SK-N-SH (cell line): ENCODE measurements at regions of chr6 and their contacts with region 1.

Region 1: DNA sequence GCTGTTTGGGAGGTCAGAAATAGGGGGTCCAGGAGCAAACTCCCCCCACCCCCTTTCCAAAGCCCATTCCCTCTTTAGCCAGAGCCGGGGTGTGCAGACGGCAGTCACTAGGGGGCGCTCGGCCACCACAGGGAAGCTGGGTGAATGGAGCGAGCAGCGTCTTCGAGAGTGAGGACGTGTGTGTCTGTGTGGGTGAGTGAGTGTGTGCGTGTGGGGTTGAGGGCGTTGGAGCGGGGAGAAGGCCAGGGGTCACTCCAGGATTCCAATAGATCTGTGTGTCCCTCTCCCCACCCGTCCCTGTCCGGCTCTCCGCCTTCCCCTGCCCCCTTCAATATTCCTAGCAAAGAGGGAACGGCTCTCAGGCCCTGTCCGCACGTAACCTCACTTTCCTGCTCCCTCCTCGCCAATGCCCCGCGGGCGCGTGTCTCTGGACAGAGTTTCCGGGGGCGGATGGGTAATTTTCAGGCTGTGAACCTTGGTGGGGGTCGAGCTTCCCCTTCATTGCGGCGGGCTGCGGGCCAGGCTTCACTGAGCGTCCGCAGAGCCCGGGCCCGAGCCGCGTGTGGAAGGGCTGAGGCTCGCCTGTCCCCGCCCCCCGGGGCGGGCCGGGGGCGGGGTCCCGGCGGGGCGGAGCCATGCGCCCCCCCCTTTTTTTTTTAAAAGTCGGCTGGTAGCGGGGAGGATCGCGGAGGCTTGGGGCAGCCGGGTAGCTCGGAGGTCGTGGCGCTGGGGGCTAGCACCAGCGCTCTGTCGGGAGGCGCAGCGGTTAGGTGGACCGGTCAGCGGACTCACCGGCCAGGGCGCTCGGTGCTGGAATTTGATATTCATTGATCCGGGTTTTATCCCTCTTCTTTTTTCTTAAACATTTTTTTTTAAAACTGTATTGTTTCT is at the start of gene VEGFA:
- DNase-seq: peak; percentile 98
- H3K4me3 ChIP-seq: peak within 1 kb of the TSS; percentile 94 to 95
- H3K27ac ChIP-seq: peak within 1 kb of the TSS; percentile 85 to 94
- H3K4me1 ChIP-seq: peaks cover 16 to 50% of the 10 kb centered on the region in 2 experiments
- H3K27me3 ChIP-seq: no peaks in the 10 kb centered on the region
- CTCF ChIP-seq: peak; percentile 99
- EP300 ChIP-seq: no peak; a peak in 1 of 4 replicates
- RAD21 ChIP-seq: peak; percentile 93
- polyA plus RNA-seq, gene VEGFA: 81.0 and 130 TPM in 2 replicates

Region 2: GRCh38 chr6:43516697-43517504 is 252.9 kb before region 1 on chr6 and contains the starts of genes POLR1C and YIPF3:
- CTCF ChIA-PET with region 1: no interaction called
- POLR2A ChIA-PET with region 1: no interaction called
- DNase-seq: peak; percentile 98
- H3K4me3 ChIP-seq: peak within 1 kb of the TSS; percentile 86 to 100
- H3K27ac ChIP-seq: peak within 1 kb of the TSS; percentile 83 to 88
- H3K4me1 ChIP-seq: peaks cover 13 to 19% of the 10 kb centered on the region in 2 experiments
- H3K27me3 ChIP-seq: no peaks in the 10 kb centered on the region
- CTCF ChIP-seq: no peak
- EP300 ChIP-seq: no peak
- RAD21 ChIP-seq: no peak
- polyA plus RNA-seq, gene POLR1C: 59.1 and 80.6 TPM in 2 replicates
- polyA plus RNA-seq, gene YIPF3: 219 and 248 TPM in 2 replicates

Region 3: GRCh38 chr6:43667245-43668150 is 102.3 kb before region 1 on chr6:
- CTCF ChIA-PET with region 1: interaction called, 111 read pairs
- POLR2A ChIA-PET with region 1: interaction called, 33 read pairs
- DNase-seq: peak; percentile 88
- H3K4me3 ChIP-seq: peak overlapping the region in 1 of 2 experiments; percentile 33; a peak in 2 of 4 replicates
- H3K27ac ChIP-seq: peak overlapping the region in 1 of 2 experiments; percentile 31; a peak in 1 of 4 replicates
- H3K4me1 ChIP-seq: peaks cover 0 to 29% of the 10 kb centered on the region in 2 experiments; a peak in 1 of 4 replicates
- H3K27me3 ChIP-seq: no peaks in the 10 kb centered on the region
- CTCF ChIP-seq: peak; percentile 89
- EP300 ChIP-seq: no peak
- RAD21 ChIP-seq: peak; percentile 86

Region 4: GRCh38 chr6:43746613-43747102 is 23.1 kb before region 1 on chr6:
- CTCF ChIA-PET with region 1: interaction called, 45 read pairs
- POLR2A ChIA-PET with region 1: no interaction called
- DNase-seq: peak; percentile 17
- H3K4me3 ChIP-seq: no peak overlapping the region
- H3K27ac ChIP-seq: no peak overlapping the region
- H3K4me1 ChIP-seq: no peaks in the 10 kb centered on the region; a peak in 1 of 4 replicates
- H3K27me3 ChIP-seq: 0 out of 2 replicates have a peak, but pooled peaks cover 4% of the 10 kb centered on the region
- CTCF ChIP-seq: no peak
- EP300 ChIP-seq: no peak
- RAD21 ChIP-seq: no peak

Region 5: GRCh38 chr6:43847741-43848605 is 78.2 kb after region 1 on chr6:
- CTCF ChIA-PET with region 1: interaction called, 11 read pairs
- POLR2A ChIA-PET with region 1: no interaction called
- DNase-seq: no peak
- H3K4me3 ChIP-seq: no peak overlapping the region
- H3K27ac ChIP-seq: no peak overlapping the region
- H3K4me1 ChIP-seq: peaks cover 0 to 7% of the 10 kb centered on the region in 2 experiments; a peak in 1 of 4 replicates
- H3K27me3 ChIP-seq: no peaks in the 10 kb centered on the region; the same call in 1 of the 2 replicates
- CTCF ChIP-seq: no peak
- EP300 ChIP-seq: no peak
- RAD21 ChIP-seq: no peak

Region 6: GRCh38 chr6:43937236-43938164 is 167.7 kb after region 1 on chr6:
- CTCF ChIA-PET with region 1: interaction called, 36 read pairs
- POLR2A ChIA-PET with region 1: interaction called, 28 read pairs
- DNase-seq: peak; percentile 67
- H3K4me3 ChIP-seq: no peak overlapping the region
- H3K27ac ChIP-seq: peak overlapping the region in 1 of 2 experiments; percentile 100; a peak in 2 of 4 replicates
- H3K4me1 ChIP-seq: peaks cover 0 to 93% of the 10 kb centered on the region in 2 experiments; a peak in 3 of 4 replicates
- H3K27me3 ChIP-seq: no peaks in the 10 kb centered on the region
- CTCF ChIP-seq: no peak
- EP300 ChIP-seq: peak in 1 of 2 experiments; percentile 43; a peak in 2 of 4 replicates
- RAD21 ChIP-seq: 0 out of 2 replicates have a peak, but pooled peaks have one; percentile 17

Region 7: GRCh38 chr6:43990627-43991619 is 221.2 kb after region 1 on chr6:
- CTCF ChIA-PET with region 1: interaction called, 26 read pairs
- POLR2A ChIA-PET with region 1: interaction called, 17 read pairs
- DNase-seq: peak; percentile 83
- H3K4me3 ChIP-seq: no peak overlapping the region
- H3K27ac ChIP-seq: peak overlapping the region in 1 of 2 experiments; percentile 98; a peak in 3 of 4 replicates
- H3K4me1 ChIP-seq: peaks cover 17 to 68% of the 10 kb centered on the region in 2 experiments; a peak in 2 of 4 replicates
- H3K27me3 ChIP-seq: no peaks in the 10 kb centered on the region
- CTCF ChIP-seq: no peak
- EP300 ChIP-seq: peak in 1 of 2 experiments; percentile 59; a peak in 2 of 4 replicates
- RAD21 ChIP-seq: peak; percentile 22; the same call in 1 of the 2 replicates

Region 8: GRCh38 chr6:44064089-44064947 is 294.5 kb after region 1 on chr6:
- CTCF ChIA-PET with region 1: interaction called, 32 read pairs
- POLR2A ChIA-PET with region 1: interaction called, 4 read pairs
- DNase-seq: no peak
- H3K4me3 ChIP-seq: no peak overlapping the region
- H3K27ac ChIP-seq: peak overlapping the region; percentile 0 to 73; a peak in 3 of 4 replicates
- H3K4me1 ChIP-seq: peaks cover 34 to 63% of the 10 kb centered on the region in 2 experiments; a peak in 3 of 4 replicates
- H3K27me3 ChIP-seq: no peaks in the 10 kb centered on the region
- CTCF ChIP-seq: no peak
- EP300 ChIP-seq: no peak; a peak in 1 of 4 replicates
- RAD21 ChIP-seq: no peak